Breast epithelium (tissue), 4 donors: ENCODE measurements at regions of chr1 and their contacts with region 1.

Region 1: DNA sequence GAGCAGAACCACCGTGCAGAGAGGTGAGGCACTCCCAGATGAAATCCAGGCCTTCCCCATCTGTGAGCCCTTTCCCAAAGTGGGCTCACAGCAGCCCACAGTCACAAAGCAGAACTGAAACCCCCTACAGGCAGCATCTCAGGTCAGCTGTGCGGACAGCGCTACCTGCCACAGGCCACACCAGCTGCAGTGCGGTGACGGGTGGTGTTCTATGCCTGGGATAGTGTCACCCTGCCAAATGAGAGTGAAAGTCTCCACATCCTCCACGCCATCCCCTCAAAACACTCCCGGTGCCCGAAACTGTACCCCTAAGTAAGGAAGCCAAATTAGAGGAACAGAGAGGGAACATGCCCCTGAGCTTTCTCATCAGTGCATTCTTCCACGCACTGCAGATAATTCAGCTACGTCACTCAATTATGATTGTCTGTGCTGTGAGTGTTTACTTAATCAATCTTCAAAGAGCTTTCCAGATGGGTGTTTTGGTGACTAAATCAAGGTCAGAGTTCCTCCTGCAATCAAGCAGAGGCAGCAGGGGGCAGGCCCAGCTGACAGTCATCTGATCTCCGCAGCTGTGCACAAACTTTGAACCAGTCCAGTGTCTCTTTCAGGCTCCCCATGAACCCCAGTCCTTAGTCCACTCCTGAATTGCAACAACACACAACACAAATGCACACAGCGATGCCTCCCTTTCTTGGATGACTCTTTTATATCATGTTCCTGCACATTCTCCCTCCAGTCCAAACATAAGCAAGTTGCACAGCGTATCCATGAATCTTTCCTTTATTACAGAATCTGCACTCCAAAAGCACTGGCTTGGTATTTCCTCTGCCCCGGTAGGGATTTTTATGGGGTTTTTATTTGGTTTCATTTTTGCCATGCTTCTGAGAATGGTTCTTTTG is 150.0 kb downstream of the TOMM20 start:
- DNase-seq: no peak
- H3K4me3 ChIP-seq: peak overlapping the region in 1 of 3 donors; percentile 9
- H3K27ac ChIP-seq: peak overlapping the region; percentile 97 to 98
- H3K4me1 ChIP-seq: peaks cover 25 to 41% of the 10 kb centered on the region in 2 donors
- H3K27me3 ChIP-seq: no peaks in the 10 kb centered on the region
- CTCF ChIP-seq: no peak
- POLR2A ChIP-seq: no peak

Region 2: GRCh38 chr1:234599617-234600417 is 378.8 kb before region 1 on chr1:
- intact Hi-C with region 1: loop called (anchors 10 kb)
- DNase-seq: peak; percentile 76 to 80
- H3K4me3 ChIP-seq: peak overlapping the region; percentile 49 to 82 (median 54)
- H3K27ac ChIP-seq: peak overlapping the region; percentile 98 to 99
- H3K4me1 ChIP-seq: peaks cover 0 to 16% of the 10 kb centered on the region in 2 donors
- H3K27me3 ChIP-seq: no peaks in the 10 kb centered on the region
- CTCF ChIP-seq: no peak
- POLR2A ChIP-seq: no peak

Region 3: DNA sequence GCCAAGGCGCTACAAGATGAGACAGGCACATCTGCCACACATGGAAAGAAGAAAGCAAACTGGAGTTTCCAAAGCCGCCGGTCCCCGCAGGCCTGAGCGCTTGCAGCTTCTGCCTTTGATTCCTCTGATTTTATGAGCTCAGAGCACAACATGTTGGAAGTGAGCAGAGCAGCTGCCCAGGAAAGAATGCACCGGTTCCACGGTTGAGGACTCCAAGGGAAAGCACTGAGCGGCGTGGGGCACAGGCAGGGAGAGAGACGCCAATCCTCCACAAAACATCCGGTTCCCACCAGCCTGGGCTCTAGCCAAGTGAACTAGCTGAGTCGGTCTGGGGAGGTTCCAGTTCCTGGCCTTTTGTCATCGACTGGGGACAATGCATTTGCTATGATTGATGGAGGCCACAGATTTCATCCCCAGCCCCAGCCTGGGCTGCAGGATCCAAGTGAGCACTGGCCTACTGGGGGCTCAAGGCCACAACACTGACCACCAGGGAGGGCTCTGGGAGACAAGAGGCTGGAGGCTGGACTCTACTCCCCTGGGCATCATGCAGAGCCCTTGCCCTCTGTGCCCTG is 115.6 kb before region 1 on chr1:
- intact Hi-C with region 1: no loop called
- DNase-seq: peak; percentile 79 to 82
- H3K4me3 ChIP-seq: peak overlapping the region in 2 of 3 donors; percentile 4 to 38
- H3K27ac ChIP-seq: peak overlapping the region; percentile 77 to 83
- H3K4me1 ChIP-seq: peaks cover 6 to 8% of the 10 kb centered on the region in 2 donors
- H3K27me3 ChIP-seq: no peaks in the 10 kb centered on the region
- CTCF ChIP-seq: no peak
- POLR2A ChIP-seq: no peak

Region 4: GRCh38 chr1:235074523-235075187 is 96.0 kb after region 1 on chr1:
- intact Hi-C with region 1: loop called (anchors 5 kb)
- DNase-seq: peak; percentile 78 to 86
- H3K4me3 ChIP-seq: peak overlapping the region in 2 of 3 donors; percentile 15 to 51
- H3K27ac ChIP-seq: peak overlapping the region; percentile 98 to 99
- H3K4me1 ChIP-seq: peaks cover 19 to 38% of the 10 kb centered on the region in 2 donors
- H3K27me3 ChIP-seq: no peaks in the 10 kb centered on the region
- CTCF ChIP-seq: no peak
- POLR2A ChIP-seq: no peak